Ascending aorta (tissue), 2 donors: ENCODE measurements at regions of chr1 and their contacts with region 1.

Region 1: GRCh38 chr1:155063550-155064110 is at the start of gene EFNA4:
- DNase-seq: peak in 1 of 2 donors; percentile 87
- H3K4me3 ChIP-seq: peak within 1 kb of the TSS; percentile 60 to 93
- H3K27ac ChIP-seq: peak within 1 kb of the TSS; percentile 38 to 65
- H3K4me1 ChIP-seq: peaks cover 14 to 18% of the 10 kb centered on the region in 2 donors
- H3K27me3 ChIP-seq: no peaks in the 10 kb centered on the region
- CTCF ChIP-seq: no peak
- total RNA-seq, gene EFNA4: 11.2 TPM

Region 2: GRCh38 chr1:154955718-154956543 is 107.7 kb before region 1 on chr1 and contains the start of gene PBXIP1:
- intact Hi-C with region 1: loop called (anchors 5 kb)
- DNase-seq: peak; percentile 52 to 93
- H3K4me3 ChIP-seq: peak within 1 kb of the TSS; percentile 68 to 70
- H3K27ac ChIP-seq: peak within 1 kb of the TSS; percentile 65 to 83
- H3K4me1 ChIP-seq: peaks cover 18 to 47% of the 10 kb centered on the region in 2 donors
- H3K27me3 ChIP-seq: no peaks in the 10 kb centered on the region
- CTCF ChIP-seq: peak in 2 of 3 experiments; percentile 15 to 26
- total RNA-seq, gene PBXIP1: 70.0 TPM

Region 3: DNA sequence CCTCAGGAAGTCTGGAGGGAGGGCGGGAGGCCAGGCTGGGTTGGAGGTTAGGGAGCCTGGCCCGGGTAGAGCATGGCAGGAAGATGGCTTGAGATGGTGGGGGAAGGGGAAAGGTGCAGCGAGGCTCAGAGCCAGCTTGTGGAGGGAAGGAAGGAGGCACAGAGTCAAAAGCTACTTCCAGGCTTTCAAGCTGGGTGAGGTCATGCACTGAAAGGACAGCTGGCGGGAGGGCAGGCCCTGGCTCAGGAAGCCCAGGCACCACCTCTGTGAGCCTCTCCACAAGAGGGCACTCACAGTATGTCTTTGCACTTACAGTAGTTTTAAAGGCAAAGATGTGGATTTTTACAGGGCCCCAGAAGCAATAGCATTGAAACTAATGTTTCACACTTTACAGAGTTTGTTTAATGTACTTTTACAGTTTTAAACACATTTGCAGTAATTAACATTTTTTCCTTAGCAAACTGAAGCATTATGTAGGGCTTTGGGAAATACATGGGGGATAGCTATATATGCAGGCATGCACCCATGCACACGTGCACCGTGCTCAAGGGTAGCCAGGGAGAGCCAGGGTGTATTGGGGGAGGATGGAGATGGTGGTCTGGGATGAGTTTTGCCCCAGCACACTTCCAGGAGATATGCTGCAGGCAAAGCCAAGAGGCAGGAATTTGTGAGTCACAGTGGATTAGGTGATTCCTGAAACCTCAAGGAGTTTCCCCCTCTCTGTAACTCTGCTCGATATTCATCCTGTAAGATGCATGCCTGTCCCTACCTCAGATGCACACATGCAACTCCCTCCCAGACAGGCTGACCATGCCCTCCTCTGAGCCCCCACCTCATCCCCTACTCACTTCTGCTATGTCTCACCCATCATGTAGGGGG is 18.6 kb before region 1 on chr1:
- intact Hi-C with region 1: loop called (anchors 1 kb)
- DNase-seq: peak; percentile 51 to 91
- H3K4me3 ChIP-seq: no peak overlapping the region
- H3K27ac ChIP-seq: no peak overlapping the region
- H3K4me1 ChIP-seq: peaks cover 0 to 4% of the 10 kb centered on the region in 2 donors
- H3K27me3 ChIP-seq: no peaks in the 10 kb centered on the region
- CTCF ChIP-seq: peak; percentile 54 to 83 (median 72)

Region 4: GRCh38 chr1:155078469-155079209 is 15.0 kb after region 1 on chr1 and contains the start of gene EFNA3:
- intact Hi-C with region 1: no loop called
- DNase-seq: peak in 1 of 2 donors; percentile 81
- H3K4me3 ChIP-seq: peak within 1 kb of the TSS; percentile 62 to 66
- H3K27ac ChIP-seq: no peak within 1 kb of the TSS
- H3K4me1 ChIP-seq: peaks cover 32 to 41% of the 10 kb centered on the region in 2 donors
- H3K27me3 ChIP-seq: peaks cover 36% of the 10 kb centered on the region
- CTCF ChIP-seq: no peak
- total RNA-seq, gene EFNA3: 1.5 TPM